AG04450 (cell line): ENCODE measurements at regions of chr19 and their contacts with region 1.

Region 1: GRCh38 chr19:46840136-46840942 is 10.3 kb downstream of the AP2S1 start:
- DNase-seq: no peak
- H3K4me3 ChIP-seq: no peak overlapping the region
- H3K27ac ChIP-seq: no peak overlapping the region
- H3K27me3 ChIP-seq: no peaks in the 10 kb centered on the region
- CTCF ChIP-seq: peak; percentile 91

Region 2: GRCh38 chr19:46746281-46747013 is 93.9 kb before region 1 on chr19 and contains the start of gene STRN4:
- CTCF ChIA-PET with region 1: interaction called, 15 read pairs
- POLR2A ChIA-PET with region 1: interaction called, 3 read pairs
- DNase-seq: no peak
- H3K4me3 ChIP-seq: peak within 1 kb of the TSS; percentile 89
- H3K27ac ChIP-seq: peak within 1 kb of the TSS; percentile 47
- H3K27me3 ChIP-seq: no peaks in the 10 kb centered on the region
- CTCF ChIP-seq: no peak
- polyA plus RNA-seq, gene STRN4: 48.1 and 59.3 TPM in 2 replicates

Region 3: GRCh38 chr19:46766569-46767317 is 73.6 kb before region 1 on chr19:
- CTCF ChIA-PET with region 1: interaction called, 15 read pairs
- POLR2A ChIA-PET with region 1: no interaction called
- DNase-seq: no peak
- H3K4me3 ChIP-seq: no peak overlapping the region
- H3K27ac ChIP-seq: no peak overlapping the region
- H3K27me3 ChIP-seq: no peaks in the 10 kb centered on the region
- CTCF ChIP-seq: peak; percentile 68

Region 4: GRCh38 chr19:46825525-46825971 is 14.8 kb before region 1 on chr19:
- CTCF ChIA-PET with region 1: interaction called, 21 read pairs
- POLR2A ChIA-PET with region 1: interaction called, 6 read pairs
- DNase-seq: no peak
- H3K4me3 ChIP-seq: no peak overlapping the region
- H3K27ac ChIP-seq: no peak overlapping the region
- H3K27me3 ChIP-seq: peaks cover 3% of the 10 kb centered on the region
- CTCF ChIP-seq: no peak

Region 5: GRCh38 chr19:46887240-46887782 is 47.0 kb after region 1 on chr19:
- CTCF ChIA-PET with region 1: interaction called, 12 read pairs
- POLR2A ChIA-PET with region 1: no interaction called
- DNase-seq: no peak
- H3K4me3 ChIP-seq: no peak overlapping the region
- H3K27ac ChIP-seq: no peak overlapping the region
- H3K27me3 ChIP-seq: no peaks in the 10 kb centered on the region
- CTCF ChIP-seq: no peak

Region 6: GRCh38 chr19:47729992-47730889 is 889.9 kb after region 1 on chr19:
- CTCF ChIA-PET with region 1: no interaction called
- POLR2A ChIA-PET with region 1: no interaction called
- DNase-seq: no peak
- H3K4me3 ChIP-seq: no peak overlapping the region
- H3K27ac ChIP-seq: peak overlapping the region; percentile 73
- H3K27me3 ChIP-seq: no peaks in the 10 kb centered on the region
- CTCF ChIP-seq: no peak